CD14-positive monocyte (primary cell): ENCODE measurements at regions of chr2 and their contacts with region 1.

Region 1: GRCh38 chr2:85712849-85713602 is 18.9 kb downstream of the GNLY start:
- DNase-seq: no peak
- H3K4me3 ChIP-seq: peak overlapping the region in 1 of 3 experiments; percentile 51
- H3K4me3 Mint-ChIP-seq: peak overlapping the region; percentile 59 to 83
- H3K27ac ChIP-seq: peak overlapping the region; percentile 68 to 81
- H3K27ac Mint-ChIP-seq: peak overlapping the region; percentile 87 to 97 (median 92)
- H3K4me1 ChIP-seq: peaks cover 89 to 95% of the 10 kb centered on the region in 2 donors
- H3K4me1 Mint-ChIP-seq: peaks cover 86% of the 10 kb centered on the region
- H3K27me3 ChIP-seq: no peaks in the 10 kb centered on the region
- H3K27me3 Mint-ChIP-seq: no peaks in the 10 kb centered on the region
- CTCF ChIP-seq: no peak

Region 2: DNA sequence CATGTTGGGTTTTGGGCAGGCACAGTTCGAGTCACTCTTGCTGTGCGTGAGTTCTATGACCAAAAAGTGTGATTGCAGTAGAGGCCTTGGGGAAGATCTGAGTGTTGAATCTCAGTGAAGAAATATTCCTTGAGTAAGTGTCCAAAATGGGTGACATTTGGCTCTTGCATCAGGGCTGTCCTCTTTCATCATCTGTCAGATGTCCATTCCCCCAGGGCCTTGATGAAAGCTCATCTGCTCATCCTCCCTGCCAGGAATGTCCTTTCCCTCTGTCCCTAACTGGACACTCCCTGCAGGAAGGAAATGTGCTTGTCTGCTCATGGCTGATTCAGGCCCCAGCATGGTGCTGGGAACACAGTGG is 38.6 kb before region 1 on chr2:
- intact Hi-C with region 1: loop called (anchors 5 kb)
- DNase-seq: peak; percentile 78 to 88 (median 86)
- H3K4me3 ChIP-seq: no peak overlapping the region
- H3K4me3 Mint-ChIP-seq: no peak overlapping the region
- H3K27ac ChIP-seq: peak overlapping the region; percentile 78 to 79
- H3K27ac Mint-ChIP-seq: peak overlapping the region; percentile 81 to 93 (median 87)
- H3K4me1 ChIP-seq: peaks cover 79 to 86% of the 10 kb centered on the region in 2 donors
- H3K4me1 Mint-ChIP-seq: peaks cover 82% of the 10 kb centered on the region
- H3K27me3 ChIP-seq: no peaks in the 10 kb centered on the region
- H3K27me3 Mint-ChIP-seq: peaks cover 0 to 3% (median 0%) of the 10 kb centered on the region in 3 donors
- CTCF ChIP-seq: no peak

Region 3: DNA sequence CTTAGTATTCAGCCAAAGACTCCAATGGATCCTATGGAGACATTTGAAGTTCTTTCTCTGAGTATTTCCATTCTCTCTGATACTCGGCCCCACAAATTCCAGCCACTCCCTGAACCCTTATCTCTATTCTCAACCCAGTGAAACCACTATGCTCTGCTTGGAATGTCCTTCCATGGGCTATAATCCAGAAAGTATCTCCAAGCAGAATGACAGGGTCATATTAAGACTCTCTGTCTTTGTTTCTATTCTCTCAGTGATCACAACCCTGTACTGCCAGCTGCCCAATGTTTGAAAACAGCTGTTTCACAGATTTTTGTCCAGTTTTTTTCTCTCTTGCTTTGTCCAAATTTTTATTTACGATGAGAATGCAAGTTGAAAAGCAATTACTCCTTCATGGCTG is 828.3 kb after region 1 on chr2:
- intact Hi-C with region 1: no loop called
- DNase-seq: no peak
- H3K4me3 ChIP-seq: no peak overlapping the region
- H3K4me3 Mint-ChIP-seq: no peak overlapping the region
- H3K27ac ChIP-seq: no peak overlapping the region
- H3K27ac Mint-ChIP-seq: no peak overlapping the region
- H3K4me1 ChIP-seq: no peaks in the 10 kb centered on the region
- H3K4me1 Mint-ChIP-seq: no peaks in the 10 kb centered on the region
- H3K27me3 ChIP-seq: no peaks in the 10 kb centered on the region
- H3K27me3 Mint-ChIP-seq: peaks cover 0 to 4% (median 1%) of the 10 kb centered on the region in 3 donors
- CTCF ChIP-seq: no peak